Activated CD4-positive, alpha-beta memory T cell treated with anti-CD3 and anti-CD28 coated beads, Interleukin-2, amount 10 ng/mL, durations not matched to agents 7 days and 5 days (primary cell): ENCODE measurements at regions of chr3 and their contacts with region 1.

Region 1: DNA sequence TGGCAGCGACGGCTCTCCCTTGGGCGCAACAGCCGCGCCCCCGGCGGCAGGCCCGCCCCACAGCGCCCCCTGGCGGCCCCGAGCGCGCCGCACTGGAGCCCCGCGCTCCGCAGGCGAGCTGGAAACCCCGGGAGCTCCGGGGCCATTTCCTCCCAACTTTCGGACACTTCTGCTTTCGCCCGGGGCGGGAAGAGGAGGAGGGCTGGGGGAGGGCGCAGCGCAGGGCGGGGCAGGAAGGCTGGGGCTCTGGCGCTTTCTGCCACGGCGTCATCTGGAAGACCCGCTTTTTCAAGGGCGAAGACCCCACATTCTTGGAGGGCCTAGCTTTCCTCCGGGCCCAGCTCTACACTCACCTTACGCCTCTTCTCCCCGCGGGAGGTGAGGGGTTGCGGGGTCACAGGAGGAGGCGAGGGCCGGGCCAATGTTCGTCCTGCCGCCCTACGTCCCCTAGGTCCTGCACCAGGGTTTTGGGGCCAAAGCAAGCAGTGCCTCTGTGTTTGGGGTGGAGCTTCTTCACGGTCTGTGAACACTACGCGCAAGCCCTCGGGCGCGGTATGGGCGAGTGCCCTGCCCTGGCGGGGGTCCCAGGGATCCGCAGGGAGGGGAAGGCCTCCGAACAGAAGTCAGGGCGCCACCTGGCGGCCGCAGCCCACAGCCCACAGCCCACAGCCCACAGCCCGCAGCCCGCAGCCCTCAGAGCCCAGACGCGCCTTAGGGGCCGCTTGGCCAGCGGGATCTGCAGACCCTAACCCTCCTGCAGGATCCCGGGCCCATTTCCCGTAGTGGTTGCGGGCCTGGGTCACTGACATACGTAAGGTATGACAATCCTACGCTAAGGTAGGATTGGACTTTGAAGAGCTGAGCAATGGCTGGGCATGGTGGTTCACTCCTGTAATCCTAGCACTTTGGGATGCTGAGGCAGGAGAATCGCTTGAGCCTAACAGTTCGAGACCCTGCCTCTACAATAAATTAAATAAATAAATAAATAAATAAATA is 31.1 kb downstream of the FOXL2 start:
- DNase-seq: peak; percentile 80
- H3K4me3 Mint-ChIP-seq: peak overlapping the region; percentile 74
- H3K27ac Mint-ChIP-seq: peak overlapping the region; percentile 56
- H3K4me1 Mint-ChIP-seq: peaks cover 9% of the 10 kb centered on the region
- H3K27me3 Mint-ChIP-seq: peaks cover 3% of the 10 kb centered on the region

Region 2: DNA sequence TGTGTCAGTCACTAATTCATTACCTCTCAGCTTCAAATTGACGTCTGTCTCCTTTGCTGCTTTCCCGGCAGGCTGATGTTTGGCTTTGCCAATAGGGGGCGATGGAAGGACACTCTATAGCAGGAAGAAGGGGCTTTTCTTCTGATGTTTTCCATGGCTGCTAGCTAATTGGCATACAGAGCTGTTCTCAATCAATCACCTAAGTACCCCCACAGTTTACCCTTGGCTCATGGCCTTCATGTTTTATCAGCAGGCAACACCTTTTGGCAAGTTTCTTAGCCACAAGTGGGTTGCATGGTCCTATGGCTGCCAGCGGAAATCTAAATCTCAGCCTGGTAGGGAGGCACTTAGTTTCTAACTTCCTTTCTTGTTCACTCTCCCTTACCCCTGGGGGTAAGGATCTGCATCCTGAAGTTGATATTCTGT is 436.4 kb before region 1 on chr3:
- CTCF ChIA-PET with region 1: interaction called, 14 read pairs
- POLR2A ChIA-PET with region 1: no interaction called
- DNase-seq: peak; percentile 55
- H3K4me3 Mint-ChIP-seq: no peak overlapping the region
- H3K27ac Mint-ChIP-seq: no peak overlapping the region
- H3K4me1 Mint-ChIP-seq: no peaks in the 10 kb centered on the region
- H3K27me3 Mint-ChIP-seq: peaks cover 8% of the 10 kb centered on the region

Region 3: DNA sequence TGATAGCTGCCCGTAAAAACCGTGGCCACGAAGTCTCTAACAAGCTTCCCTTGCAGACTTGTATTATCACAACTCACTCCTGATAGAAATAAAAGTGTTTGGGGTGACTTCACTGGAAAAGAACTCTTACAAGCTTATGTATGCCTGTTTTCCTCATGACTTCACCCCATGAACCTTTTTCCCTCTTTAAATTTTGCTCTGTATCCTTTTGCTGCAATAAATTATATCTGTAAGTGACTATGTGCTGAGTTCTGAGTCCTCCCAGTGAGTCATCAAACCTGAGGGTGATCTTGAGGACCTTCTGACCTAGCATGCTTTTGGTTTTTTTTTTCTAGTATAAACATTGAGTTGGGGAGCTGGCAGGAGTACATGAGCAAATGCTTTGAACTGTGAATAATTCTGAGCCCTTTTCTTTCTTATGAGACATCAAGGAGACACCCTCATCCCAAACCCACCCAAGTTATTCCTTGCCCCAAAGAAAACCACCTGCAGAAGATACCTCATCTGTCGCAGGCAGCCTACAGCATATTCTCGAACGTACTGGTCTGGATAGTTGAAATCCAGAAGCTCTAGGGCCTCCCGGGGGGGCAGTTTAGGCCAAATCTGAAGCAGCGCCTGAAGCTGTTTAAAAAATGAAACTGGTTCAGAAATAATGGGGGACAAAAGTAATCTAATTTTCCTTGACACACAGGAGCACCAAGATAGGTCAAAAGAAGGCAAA is 221.4 kb before region 1 on chr3:
- CTCF ChIA-PET with region 1: interaction called, 405 read pairs
- POLR2A ChIA-PET with region 1: interaction called, 7 read pairs
- DNase-seq: no peak
- H3K4me3 Mint-ChIP-seq: no peak overlapping the region
- H3K27ac Mint-ChIP-seq: no peak overlapping the region
- H3K4me1 Mint-ChIP-seq: no peaks in the 10 kb centered on the region
- H3K27me3 Mint-ChIP-seq: no peaks in the 10 kb centered on the region

Region 4: DNA sequence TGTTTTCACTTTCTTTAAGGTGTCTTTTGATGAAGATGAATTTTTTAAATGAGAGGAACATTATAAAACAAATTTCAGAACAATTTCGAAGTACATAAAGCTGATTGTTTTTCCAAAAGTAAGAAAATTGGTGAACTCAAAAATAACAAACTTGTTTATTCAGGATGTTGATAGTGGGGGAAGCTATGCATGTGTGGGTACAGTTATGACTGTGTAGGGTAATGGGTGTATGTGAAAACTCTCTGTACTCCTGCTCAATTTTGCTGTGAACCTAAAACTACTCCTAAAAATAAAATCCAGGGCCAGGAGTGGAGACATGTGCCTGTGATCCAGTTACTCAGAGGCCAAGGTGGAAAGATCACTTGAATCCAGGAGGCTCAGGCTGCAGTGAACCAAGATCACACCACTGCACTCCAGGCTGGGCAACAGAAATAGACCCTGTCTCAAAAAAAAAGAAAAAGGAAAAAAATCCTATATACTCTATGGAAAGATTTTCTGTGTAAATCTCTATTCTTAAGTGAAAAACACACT is 118.2 kb before region 1 on chr3:
- CTCF ChIA-PET with region 1: interaction called, 11 read pairs
- POLR2A ChIA-PET with region 1: no interaction called
- DNase-seq: no peak
- H3K4me3 Mint-ChIP-seq: no peak overlapping the region
- H3K27ac Mint-ChIP-seq: peak overlapping the region; percentile 3
- H3K4me1 Mint-ChIP-seq: peaks cover 14% of the 10 kb centered on the region
- H3K27me3 Mint-ChIP-seq: no peaks in the 10 kb centered on the region

Region 5: GRCh38 chr3:138898301-138898700 is 17.5 kb before region 1 on chr3:
- CTCF ChIA-PET with region 1: interaction called, 14 read pairs
- POLR2A ChIA-PET with region 1: interaction called, 3 read pairs
- DNase-seq: no peak
- H3K4me3 Mint-ChIP-seq: no peak overlapping the region
- H3K27ac Mint-ChIP-seq: no peak overlapping the region
- H3K4me1 Mint-ChIP-seq: no peaks in the 10 kb centered on the region
- H3K27me3 Mint-ChIP-seq: peaks cover 3% of the 10 kb centered on the region

Region 6: DNA sequence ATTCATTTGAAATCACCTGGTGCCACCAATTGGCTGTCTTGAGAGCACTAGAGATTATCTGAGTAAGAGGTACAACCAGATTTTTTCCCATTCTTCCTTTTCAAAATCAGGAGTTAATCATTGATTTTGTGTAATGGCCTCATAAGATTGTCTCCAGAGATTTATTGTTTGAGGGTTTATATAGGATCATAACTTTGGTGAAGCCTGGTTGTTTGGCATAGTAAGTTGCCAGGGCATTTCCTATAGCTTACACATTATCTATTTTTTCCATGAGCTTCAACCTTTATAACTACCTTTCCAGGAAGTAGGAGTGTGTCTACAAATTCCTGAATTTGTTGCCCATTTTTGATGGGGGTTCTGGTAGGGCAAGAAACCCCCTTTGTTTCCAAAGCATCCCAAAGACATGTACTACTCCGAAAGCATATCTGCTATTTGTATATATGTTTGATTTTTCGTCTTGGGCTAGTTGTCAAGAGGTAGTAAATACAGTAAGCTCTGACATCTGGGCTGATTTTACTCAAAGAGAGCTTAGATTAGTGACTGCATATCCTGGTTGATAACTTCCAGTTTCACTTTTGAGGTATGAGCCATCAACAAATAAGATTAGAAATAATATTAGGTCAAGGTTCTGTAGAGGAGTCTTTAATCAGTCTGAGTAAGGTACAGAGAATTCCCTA is 116.7 kb after region 1 on chr3:
- CTCF ChIA-PET with region 1: no interaction called
- POLR2A ChIA-PET with region 1: no interaction called
- DNase-seq: no peak
- H3K4me3 Mint-ChIP-seq: no peak overlapping the region
- H3K27ac Mint-ChIP-seq: no peak overlapping the region
- H3K4me1 Mint-ChIP-seq: no peaks in the 10 kb centered on the region
- H3K27me3 Mint-ChIP-seq: no peaks in the 10 kb centered on the region